B cell (primary cell): ENCODE measurements at regions of chr16 and their contacts with region 1.

Region 1: DNA sequence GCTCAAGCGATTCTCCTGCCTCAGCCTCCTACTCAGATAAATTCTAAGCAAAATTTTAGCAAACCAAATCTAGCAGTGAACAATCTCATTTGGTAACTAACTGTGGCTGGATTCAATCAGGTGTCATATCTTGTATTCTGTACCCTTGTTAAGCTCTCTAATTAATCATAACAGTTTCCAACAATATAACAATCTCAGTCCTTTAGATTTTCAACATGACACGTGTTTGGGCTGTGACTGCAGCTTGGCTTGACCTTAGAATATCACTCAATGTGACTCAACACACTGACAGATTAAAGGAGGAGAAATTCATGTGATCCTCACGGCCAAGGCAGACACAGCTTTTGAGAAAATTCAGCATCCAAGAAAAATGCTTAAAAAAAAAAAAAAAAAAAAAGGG is 133.6 kb downstream of the BANP start:
- DNase-seq: no peak
- ATAC-seq: no peak
- H3K4me3 ChIP-seq: no peak overlapping the region
- H3K4me3 Mint-ChIP-seq: no peak overlapping the region
- H3K27ac ChIP-seq: no peak overlapping the region
- H3K27ac Mint-ChIP-seq: no peak overlapping the region
- H3K4me1 ChIP-seq: no peaks in the 10 kb centered on the region
- H3K4me1 Mint-ChIP-seq: peaks cover 7% of the 10 kb centered on the region
- H3K27me3 ChIP-seq: no peaks in the 10 kb centered on the region
- H3K27me3 Mint-ChIP-seq: no peaks in the 10 kb centered on the region
- CTCF ChIP-seq: no peak

Region 2: GRCh38 chr16:88132836-88133506 is 48.1 kb after region 1 on chr16:
- CTCF ChIA-PET with region 1: no interaction called
- POLR2A ChIA-PET with region 1: interaction called, 12 read pairs
- intact Hi-C with region 1: no loop called
- DNase-seq: no peak
- ATAC-seq: no peak
- H3K4me3 ChIP-seq: no peak overlapping the region
- H3K4me3 Mint-ChIP-seq: no peak overlapping the region
- H3K27ac ChIP-seq: no peak overlapping the region
- H3K27ac Mint-ChIP-seq: no peak overlapping the region
- H3K4me1 ChIP-seq: no peaks in the 10 kb centered on the region
- H3K4me1 Mint-ChIP-seq: no peaks in the 10 kb centered on the region
- H3K27me3 ChIP-seq: no peaks in the 10 kb centered on the region
- H3K27me3 Mint-ChIP-seq: peaks cover 3% of the 10 kb centered on the region
- CTCF ChIP-seq: no peak